ENCODE measurements at regions of chr12 and their contacts with region 1.

Region 1: DNA sequence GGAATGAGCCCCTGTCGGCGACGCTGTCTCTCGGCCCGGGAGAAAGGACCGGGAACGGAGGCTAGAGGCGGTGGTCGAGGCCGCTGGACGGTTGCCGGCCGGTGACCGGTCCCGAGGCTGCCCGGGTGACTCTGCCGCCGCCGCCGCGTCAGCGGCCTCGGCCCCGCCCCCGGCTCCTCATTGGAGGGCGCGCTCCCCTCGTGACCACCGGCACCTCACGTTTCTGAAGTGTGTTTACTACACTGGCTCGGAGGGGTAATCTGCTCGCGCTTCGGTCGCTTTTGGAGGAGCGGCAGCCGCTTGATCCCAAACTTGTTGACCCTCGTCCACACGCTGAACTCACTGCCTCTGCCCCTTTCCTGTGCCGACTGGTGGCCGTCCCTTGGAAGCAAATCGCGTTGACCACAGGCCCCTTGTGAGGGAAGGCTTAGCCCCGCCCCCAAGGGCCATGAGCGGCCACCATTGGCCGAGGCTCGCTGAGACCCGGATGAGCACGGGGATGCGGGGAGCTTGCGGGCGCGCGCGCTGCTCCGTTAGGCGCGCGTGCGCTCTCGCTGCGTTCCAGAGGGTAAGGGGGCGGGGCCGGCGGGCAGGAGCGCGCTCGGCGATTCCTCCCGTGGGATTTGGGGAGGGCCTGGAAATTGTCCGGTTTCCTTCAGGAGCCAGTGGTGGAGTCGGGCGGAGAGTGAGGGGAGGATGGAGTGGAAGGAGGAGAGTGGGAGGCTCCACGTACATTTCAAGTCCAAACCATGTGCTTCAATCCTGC is at the start of gene CRY1:
- DNase-seq: peak; percentile 81 to 95
- H3K4me3 ChIP-seq: peak within 1 kb of the TSS; percentile 64
- H3K27ac ChIP-seq: peak within 1 kb of the TSS; percentile 72
- H3K4me1 ChIP-seq: peaks cover 19% of the 10 kb centered on the region
- H3K27me3 ChIP-seq: no peaks in the 10 kb centered on the region
- CTCF ChIP-seq: no peak
- total RNA-seq, gene CRY1: 15.7 and 18.1 TPM in 2 replicates

Region 2: GRCh38 chr12:106774005-106774807 is 319.4 kb before region 1 on chr12 and contains the start of gene RIC8B:
- CTCF ChIA-PET with region 1: no interaction called
- POLR2A ChIA-PET with region 1: no interaction called
- intact Hi-C with region 1: loop called (anchors 5 kb)
- DNase-seq: peak; percentile 93 to 95
- H3K4me3 ChIP-seq: peak within 1 kb of the TSS; percentile 93
- H3K27ac ChIP-seq: peak within 1 kb of the TSS; percentile 78
- H3K4me1 ChIP-seq: peaks cover 28% of the 10 kb centered on the region
- H3K27me3 ChIP-seq: no peaks in the 10 kb centered on the region
- CTCF ChIP-seq: no peak
- total RNA-seq, gene RIC8B: 9.0 and 14.9 TPM in 2 replicates

Region 3: GRCh38 chr12:106986625-106987430 is 106.8 kb before region 1 on chr12 and contains the start of gene MTERF2:
- CTCF ChIA-PET with region 1: no interaction called
- POLR2A ChIA-PET with region 1: no interaction called
- intact Hi-C with region 1: loop called (anchors 10 kb)
- DNase-seq: peak; percentile 86 to 89
- H3K4me3 ChIP-seq: peak within 1 kb of the TSS; percentile 74
- H3K27ac ChIP-seq: no peak within 1 kb of the TSS
- H3K4me1 ChIP-seq: peaks cover 12% of the 10 kb centered on the region
- H3K27me3 ChIP-seq: no peaks in the 10 kb centered on the region
- CTCF ChIP-seq: no peak
- total RNA-seq, gene MTERF2: 8.2 and 9.0 TPM in 2 replicates

Region 4: DNA sequence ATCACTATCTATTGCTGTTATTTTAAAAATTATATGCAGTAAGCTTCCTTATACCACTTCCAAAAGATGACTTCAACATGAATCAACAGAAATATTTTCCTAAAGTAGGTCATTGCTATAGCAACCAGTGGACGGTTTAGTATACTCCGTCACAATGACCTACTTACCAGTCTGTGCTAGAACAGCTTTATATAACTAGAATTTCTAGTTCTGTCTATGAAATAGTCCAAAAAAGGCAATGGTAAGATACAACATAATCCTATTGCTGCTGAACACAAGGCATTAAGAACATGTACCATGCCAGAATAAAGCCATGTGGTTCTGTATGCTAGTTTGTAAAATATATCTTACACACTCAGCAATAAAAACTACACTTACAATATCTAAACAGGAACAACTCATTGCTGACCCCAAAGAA is 66.0 kb before region 1 on chr12:
- CTCF ChIA-PET with region 1: no interaction called
- POLR2A ChIA-PET with region 1: no interaction called
- intact Hi-C with region 1: loop called (anchors 1 kb)
- DNase-seq: peak; percentile 12 to 99
- H3K4me3 ChIP-seq: no peak overlapping the region
- H3K27ac ChIP-seq: peak overlapping the region; percentile 69
- H3K4me1 ChIP-seq: peaks cover 51% of the 10 kb centered on the region
- H3K27me3 ChIP-seq: no peaks in the 10 kb centered on the region
- CTCF ChIP-seq: no peak

Region 5: DNA sequence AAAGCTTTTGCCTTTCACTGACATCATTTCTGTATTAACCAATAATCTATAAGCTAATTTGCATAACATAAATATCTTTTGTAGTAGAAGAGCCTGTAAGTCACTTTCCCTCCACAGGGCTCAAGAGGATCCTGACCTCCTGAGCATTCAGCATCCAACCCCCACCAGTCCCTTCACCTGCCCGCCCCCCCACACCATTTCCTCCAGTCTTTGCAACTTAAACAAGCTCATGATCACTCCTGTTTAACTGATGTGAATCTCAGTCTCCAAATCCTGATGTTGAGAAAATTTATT is 11.8 kb after region 1 on chr12:
- CTCF ChIA-PET with region 1: interaction called, 11 read pairs
- POLR2A ChIA-PET with region 1: no interaction called
- intact Hi-C with region 1: no loop called
- DNase-seq: no peak
- H3K4me3 ChIP-seq: no peak overlapping the region
- H3K27ac ChIP-seq: no peak overlapping the region
- H3K4me1 ChIP-seq: no peaks in the 10 kb centered on the region
- H3K27me3 ChIP-seq: no peaks in the 10 kb centered on the region; the same call in 1 of the 2 replicates
- CTCF ChIP-seq: no peak